Naive thymus-derived CD4-positive, alpha-beta T cell (primary cell): ENCODE measurements at regions of chr6 and their contacts with region 1.

Region 1: DNA sequence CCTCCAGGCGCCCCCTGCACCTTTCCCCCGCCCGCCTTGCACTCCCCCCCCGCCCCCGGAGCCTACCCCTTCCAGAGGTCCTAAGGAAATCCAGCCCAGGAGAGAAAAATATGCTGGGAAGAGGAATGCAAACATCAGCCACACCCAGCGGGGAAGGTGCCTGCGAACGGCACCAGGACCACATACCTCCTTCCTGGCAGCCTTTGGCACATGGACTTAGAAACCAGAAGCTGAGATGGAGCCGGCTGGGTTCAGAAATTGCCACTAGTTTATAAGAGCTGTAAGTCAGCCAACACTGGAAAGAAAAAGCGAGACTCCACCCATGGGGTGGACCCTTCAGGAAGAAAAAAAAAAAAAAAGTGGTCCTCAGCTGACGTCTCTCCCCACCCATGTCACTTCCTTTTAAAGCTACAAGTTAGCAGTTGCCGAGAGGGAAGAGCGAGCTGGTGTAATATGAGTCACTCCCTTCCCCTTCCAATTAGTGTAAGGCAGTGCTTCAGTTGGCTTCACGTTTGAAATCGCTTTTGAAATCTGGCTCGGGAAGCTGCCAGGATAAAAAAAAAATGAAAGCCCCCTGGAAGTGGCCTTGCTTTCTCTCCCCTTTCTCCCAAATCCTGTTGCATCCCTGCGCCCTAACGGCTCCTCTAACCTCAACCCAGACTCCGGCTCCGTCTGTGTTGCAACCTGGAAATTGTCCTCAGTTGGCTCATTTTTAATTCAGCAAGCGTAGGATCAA is at the start of gene AGPAT4:
- DNase-seq: peak; percentile 31 to 85 (median 78)
- ATAC-seq: peak; percentile 96
- H3K4me3 ChIP-seq: peak within 1 kb of the TSS; percentile 46
- H3K4me3 Mint-ChIP-seq: peak within 1 kb of the TSS; percentile 82 to 98 (median 94)
- H3K27ac ChIP-seq: peak within 1 kb of the TSS; percentile 66
- H3K27ac Mint-ChIP-seq: peak within 1 kb of the TSS; percentile 87 to 98 (median 94)
- H3K4me1 ChIP-seq: peaks cover 0 to 6% of the 10 kb centered on the region in 2 donors
- H3K4me1 Mint-ChIP-seq: peaks cover 10 to 31% (median 19%) of the 10 kb centered on the region in 7 donors
- H3K27me3 ChIP-seq: no peaks in the 10 kb centered on the region
- H3K27me3 Mint-ChIP-seq: peaks cover 0 to 15% (median 0%) of the 10 kb centered on the region in 5 donors
- total RNA-seq, gene AGPAT4: 2.0 to 16.2 (median 4.4) TPM

Region 2: GRCh38 chr6:161228921-161229591 is 44.9 kb before region 1 on chr6:
- CTCF ChIA-PET with region 1: no interaction called
- POLR2A ChIA-PET with region 1: no interaction called
- intact Hi-C with region 1: loop called in 1 of 2 experiments (anchors 1 kb)
- DNase-seq: no peak
- ATAC-seq: peak; percentile 40
- H3K4me3 ChIP-seq: no peak overlapping the region
- H3K4me3 Mint-ChIP-seq: peak overlapping the region in 1 of 10 donors; percentile 76
- H3K27ac ChIP-seq: no peak overlapping the region
- H3K27ac Mint-ChIP-seq: peak overlapping the region in 1 of 9 donors; percentile 90
- H3K4me1 ChIP-seq: peaks cover 0 to 16% of the 10 kb centered on the region in 2 donors
- H3K4me1 Mint-ChIP-seq: peaks cover 9 to 56% (median 25%) of the 10 kb centered on the region in 7 donors
- H3K27me3 ChIP-seq: no peaks in the 10 kb centered on the region
- H3K27me3 Mint-ChIP-seq: no peaks in the 10 kb centered on the region